OCI-LY7 (cell line): ENCODE measurements at regions of chr4 and their contacts with region 1.

Region 1: DNA sequence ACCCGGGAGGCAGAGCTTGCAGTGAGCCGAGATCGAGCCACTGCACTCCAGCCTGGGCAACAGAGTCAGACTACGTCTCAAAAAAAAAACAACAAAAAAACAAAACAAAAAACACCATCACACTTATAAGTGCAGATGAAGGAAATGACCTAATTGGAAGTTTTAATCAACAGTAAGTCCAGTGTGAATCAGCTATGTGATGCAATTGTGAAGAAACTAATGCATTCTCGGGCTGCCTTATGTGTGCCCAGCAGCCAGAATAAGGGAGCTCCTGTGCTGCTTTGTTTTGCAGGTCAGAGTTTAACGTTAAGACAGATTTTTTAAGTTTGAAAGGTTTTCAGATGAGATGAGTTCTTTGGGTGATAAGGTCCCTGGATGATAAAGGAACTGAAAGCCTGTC is 10.8 kb downstream of the DAPP1 start:
- DNase-seq: no peak
- H3K4me3 ChIP-seq: no peak overlapping the region
- H3K27ac ChIP-seq: no peak overlapping the region
- H3K4me1 ChIP-seq: peaks cover 53% of the 10 kb centered on the region
- CTCF ChIP-seq: no peak

Region 2: GRCh38 chr4:99504804-99505569 is 322.5 kb before region 1 on chr4:
- CTCF ChIA-PET with region 1: no interaction called
- POLR2A ChIA-PET with region 1: no interaction called
- intact Hi-C with region 1: no loop called
- DNase-seq: no peak
- H3K4me3 ChIP-seq: no peak overlapping the region
- H3K27ac ChIP-seq: no peak overlapping the region
- H3K4me1 ChIP-seq: no peaks in the 10 kb centered on the region
- CTCF ChIP-seq: no peak

Region 3: GRCh38 chr4:99847362-99847976 is 20.0 kb after region 1 on chr4:
- CTCF ChIA-PET with region 1: interaction called, 3 read pairs
- POLR2A ChIA-PET with region 1: interaction called, 30 read pairs
- intact Hi-C with region 1: no loop called
- DNase-seq: peak; percentile 83
- H3K4me3 ChIP-seq: peak overlapping the region; percentile 40
- H3K27ac ChIP-seq: peak overlapping the region; percentile 75
- H3K4me1 ChIP-seq: peaks cover 49% of the 10 kb centered on the region
- CTCF ChIP-seq: no peak

Region 4: GRCh38 chr4:99859618-99860017 is 32.2 kb after region 1 on chr4:
- CTCF ChIA-PET with region 1: no interaction called
- POLR2A ChIA-PET with region 1: interaction called, 5 read pairs
- intact Hi-C with region 1: loop called (anchors 1 kb)
- DNase-seq: peak; percentile 63
- H3K4me3 ChIP-seq: peak overlapping the region; percentile 3
- H3K27ac ChIP-seq: peak overlapping the region; percentile 39
- H3K4me1 ChIP-seq: peaks cover 49% of the 10 kb centered on the region
- CTCF ChIP-seq: no peak